Heart right ventricle (tissue), 16 donors: ENCODE measurements at regions of chr5 and their contacts with region 1.

Region 1: GRCh38 chr5:114449860-114450421 is 88.1 kb downstream of the KCNN2 start:
- DNase-seq: peak; percentile 75 to 80
- ATAC-seq: peak; percentile 94 to 100 (median 99)
- H3K4me3 ChIP-seq: peak overlapping the region in 2 of 10 donors; percentile 14 to 29
- H3K27ac ChIP-seq: peak overlapping the region in 2 of 10 donors; percentile 50 to 55
- H3K4me1 ChIP-seq: peaks cover 0 to 28% (median 6%) of the 10 kb centered on the region in 9 donors
- H3K27me3 ChIP-seq: no peaks in the 10 kb centered on the region
- CTCF ChIP-seq: peak; percentile 74 to 93 (median 81)

Region 2: DNA sequence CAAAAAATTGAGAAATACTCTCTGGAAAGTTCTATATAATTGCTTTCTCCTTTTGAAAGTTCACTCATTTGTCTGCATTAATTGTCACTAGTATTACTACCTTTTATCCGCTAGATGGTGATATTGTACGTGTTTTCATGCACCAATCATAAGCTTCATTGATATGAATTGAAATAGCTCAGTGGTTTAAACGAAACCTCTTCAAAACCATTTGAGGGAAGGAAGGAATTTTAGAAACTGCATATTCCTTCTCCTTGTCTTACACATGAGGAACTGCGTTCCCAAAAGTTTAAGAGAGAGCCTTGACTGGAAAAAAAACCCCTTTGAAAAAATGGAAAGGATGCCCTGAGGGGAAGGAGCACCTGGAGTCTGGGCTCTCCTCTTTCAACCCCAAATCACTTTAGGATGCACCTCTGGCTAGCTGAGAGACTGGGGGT is 837.9 kb before region 1 on chr5:
- intact Hi-C with region 1: loop called in 8 of 10 experiments (anchors 2 to 10 kb)
- DNase-seq: no peak
- ATAC-seq: peak in 4 of 8 donors; percentile 41 to 55 (median 48)
- H3K4me3 ChIP-seq: no peak overlapping the region
- H3K27ac ChIP-seq: no peak overlapping the region
- H3K4me1 ChIP-seq: peaks cover 0 to 8% (median 0%) of the 10 kb centered on the region in 9 donors
- H3K27me3 ChIP-seq: peaks cover 0 to 10% (median 0%) of the 10 kb centered on the region in 7 donors
- CTCF ChIP-seq: peak in 8 of 9 donors; percentile 30 to 76 (median 67)

Region 3: DNA sequence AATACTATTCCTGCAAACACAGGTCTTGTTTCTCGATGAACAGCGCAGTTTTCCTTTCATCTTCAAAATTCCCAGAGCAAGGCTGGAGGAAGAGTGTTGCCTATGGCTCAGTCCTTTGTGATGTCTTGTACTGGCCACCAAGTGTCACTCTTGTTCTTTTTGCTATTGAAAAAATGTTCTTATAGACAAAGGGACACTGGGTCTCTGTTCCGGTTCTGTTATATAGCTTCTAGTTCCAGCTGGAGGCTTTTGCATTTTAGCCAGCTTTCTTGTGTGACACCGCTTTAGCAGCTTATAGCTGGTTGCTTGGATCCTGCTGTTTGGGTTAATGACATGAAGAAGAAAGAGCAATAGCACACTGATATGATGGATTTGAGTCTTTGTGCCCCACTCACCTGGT is 431.8 kb before region 1 on chr5:
- intact Hi-C with region 1: loop called in 6 of 10 experiments (anchors 2 to 10 kb)
- DNase-seq: no peak
- ATAC-seq: peak in 4 of 8 donors; percentile 33 to 60 (median 54)
- H3K4me3 ChIP-seq: no peak overlapping the region
- H3K27ac ChIP-seq: no peak overlapping the region
- H3K4me1 ChIP-seq: no peaks in the 10 kb centered on the region
- H3K27me3 ChIP-seq: peaks cover 0 to 16% (median 0%) of the 10 kb centered on the region in 7 donors
- CTCF ChIP-seq: peak; percentile 15 to 70 (median 50)

Region 4: DNA sequence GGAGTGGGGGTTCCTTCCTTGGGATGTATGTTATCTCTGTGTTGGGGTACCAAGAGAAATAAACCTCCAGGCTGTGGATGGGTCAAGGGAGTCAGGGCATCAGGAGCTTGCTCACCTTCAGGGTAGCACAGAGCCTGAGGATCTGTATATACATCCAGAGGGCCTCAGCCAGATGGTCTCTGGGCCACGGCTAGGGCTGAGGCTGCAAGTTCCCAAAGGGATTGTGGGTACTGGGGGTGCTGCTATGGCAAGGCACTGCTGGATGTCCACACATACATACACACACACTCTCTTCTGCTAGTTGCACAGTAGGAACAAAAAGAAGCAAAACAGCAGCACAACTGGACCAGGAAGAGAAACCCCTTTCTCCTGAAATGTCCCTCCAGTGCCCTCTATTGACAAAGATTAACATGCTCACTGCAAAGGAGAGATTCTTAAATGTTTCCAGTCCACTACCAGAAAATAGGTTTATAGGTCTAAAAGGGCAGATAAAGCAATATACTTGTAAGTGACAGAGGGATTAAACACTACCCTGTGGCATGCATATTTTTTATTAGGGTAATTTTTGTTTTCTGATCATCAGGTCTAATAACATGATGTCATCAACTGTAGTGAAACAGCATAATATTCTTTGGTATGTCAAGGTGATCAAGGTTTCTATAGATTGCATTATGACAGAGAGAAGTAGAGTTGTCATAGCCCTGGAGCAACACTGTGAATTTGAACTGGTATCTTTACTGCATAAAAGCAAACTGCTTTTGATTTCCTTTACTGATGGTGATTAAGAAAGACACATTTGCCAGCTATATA is 144.3 kb before region 1 on chr5:
- intact Hi-C with region 1: loop called in 2 of 10 experiments (anchors 5 to 10 kb)
- DNase-seq: no peak
- ATAC-seq: peak in 2 of 8 donors; percentile 24 to 31
- H3K4me3 ChIP-seq: no peak overlapping the region
- H3K27ac ChIP-seq: no peak overlapping the region
- H3K4me1 ChIP-seq: no peaks in the 10 kb centered on the region
- H3K27me3 ChIP-seq: no peaks in the 10 kb centered on the region
- CTCF ChIP-seq: peak in 7 of 9 donors; percentile 47 to 69 (median 50)

Region 5: DNA sequence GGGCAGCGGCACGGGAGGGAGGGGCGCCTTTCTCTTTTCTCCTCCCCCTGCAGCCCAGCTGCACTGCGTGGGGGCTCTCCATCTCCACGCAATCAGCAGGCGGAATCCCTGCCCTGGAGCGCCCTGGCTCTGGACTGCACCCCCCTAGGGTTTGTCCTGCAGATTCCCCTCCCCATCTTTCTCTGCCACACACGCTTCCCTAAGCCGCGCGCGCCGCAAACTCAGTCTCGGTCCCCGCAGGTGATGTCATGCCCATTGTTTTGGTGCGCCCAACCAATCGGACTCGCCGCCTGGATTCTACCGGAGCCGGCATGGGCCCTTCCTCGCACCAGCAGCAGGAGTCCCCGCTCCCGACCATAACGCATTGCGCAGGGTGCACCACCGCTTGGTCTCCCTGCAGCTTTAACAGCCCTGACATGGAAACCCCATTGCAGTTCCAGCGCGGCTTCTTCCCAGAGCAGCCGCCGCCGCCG is 88.2 kb before region 1 on chr5 and contains the start of gene KCNN2:
- intact Hi-C with region 1: loop called in 5 of 10 experiments (anchors 5 to 10 kb)
- DNase-seq: peak; percentile 81 to 92
- ATAC-seq: peak; percentile 94 to 99 (median 98)
- H3K4me3 ChIP-seq: peak within 1 kb of the TSS; percentile 65 to 94 (median 82)
- H3K27ac ChIP-seq: peak within 1 kb of the TSS in 8 of 10 donors; percentile 54 to 84 (median 73)
- H3K4me1 ChIP-seq: peaks cover 7 to 35% (median 21%) of the 10 kb centered on the region in 9 donors
- H3K27me3 ChIP-seq: peaks cover 0 to 67% (median 27%) of the 10 kb centered on the region in 7 donors
- CTCF ChIP-seq: no peak
- total RNA-seq, gene KCNN2: 4.7 to 10.7 (median 7.6) TPM